ENCODE measurements at regions of chr6 and their contacts with region 1.

Region 1: DNA sequence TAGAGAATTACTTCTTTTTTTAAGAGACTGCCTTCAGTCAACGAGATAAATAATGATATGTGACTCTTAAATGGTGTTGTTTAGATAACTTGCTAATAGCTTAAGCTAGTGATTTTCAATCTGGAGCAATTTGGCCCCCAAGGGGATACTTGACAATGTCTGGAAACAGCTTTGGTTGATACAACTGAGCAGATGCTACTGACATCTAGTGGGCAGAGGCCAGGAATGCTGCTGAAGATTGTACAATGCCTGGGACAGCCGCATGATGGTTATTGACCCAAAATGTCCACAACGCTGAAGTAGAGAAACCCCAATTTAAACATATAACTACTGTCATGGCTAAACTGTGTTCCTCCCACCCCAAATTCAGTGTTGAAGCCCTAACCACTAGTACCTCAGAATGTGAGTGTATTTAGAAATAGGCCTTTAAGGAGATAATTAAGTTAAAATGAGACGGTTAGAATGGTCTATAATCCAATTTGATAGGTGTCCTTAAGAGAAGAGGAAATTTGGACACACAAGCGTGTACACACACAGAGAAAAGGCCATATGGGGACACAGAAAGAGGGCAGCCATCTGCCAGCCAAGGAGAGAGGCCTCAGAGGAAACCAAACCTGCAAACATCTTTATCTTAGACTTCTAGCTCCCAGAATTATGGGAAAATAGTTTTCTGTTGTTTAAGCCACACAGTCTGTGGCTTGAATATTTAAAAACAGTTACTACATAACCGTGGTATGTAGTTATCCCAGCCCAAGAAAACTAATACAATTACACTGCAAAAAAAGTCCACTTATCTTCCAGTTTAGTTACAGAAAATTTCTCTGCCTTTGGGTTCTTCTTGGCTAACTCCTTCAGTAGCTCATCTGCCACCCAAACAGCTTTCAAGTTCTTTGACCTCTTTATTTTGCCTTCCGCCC is 22.2 kb downstream of the RWDD2A start:
- DNase-seq: peak; percentile 82
- H3K4me3 ChIP-seq: no peak overlapping the region
- H3K27ac ChIP-seq: no peak overlapping the region
- H3K4me1 ChIP-seq: no peaks in the 10 kb centered on the region
- H3K27me3 ChIP-seq: no peaks in the 10 kb centered on the region
- CTCF ChIP-seq: peak; percentile 82 to 83
- POLR2A ChIP-seq: no peak

Region 2: GRCh38 chr6:83169511-83169910 is 45.9 kb before region 1 on chr6:
- CTCF ChIA-PET with region 1: interaction called, 18 read pairs
- POLR2A ChIA-PET with region 1: no interaction called
- dilution Hi-C with region 1: no loop called
- intact Hi-C with region 1: loop called (anchors 2 kb)
- DNase-seq: no peak
- H3K4me3 ChIP-seq: no peak overlapping the region
- H3K27ac ChIP-seq: no peak overlapping the region
- H3K4me1 ChIP-seq: no peaks in the 10 kb centered on the region
- H3K27me3 ChIP-seq: no peaks in the 10 kb centered on the region
- CTCF ChIP-seq: no peak
- POLR2A ChIP-seq: no peak

Region 3: GRCh38 chr6:83176246-83176645 is 39.1 kb before region 1 on chr6:
- CTCF ChIA-PET with region 1: interaction called, 9 read pairs
- POLR2A ChIA-PET with region 1: no interaction called
- dilution Hi-C with region 1: no loop called
- intact Hi-C with region 1: loop called (anchors 2 kb)
- DNase-seq: no peak
- H3K4me3 ChIP-seq: no peak overlapping the region
- H3K27ac ChIP-seq: no peak overlapping the region
- H3K4me1 ChIP-seq: no peaks in the 10 kb centered on the region
- H3K27me3 ChIP-seq: no peaks in the 10 kb centered on the region
- CTCF ChIP-seq: no peak
- POLR2A ChIP-seq: no peak

Region 4: DNA sequence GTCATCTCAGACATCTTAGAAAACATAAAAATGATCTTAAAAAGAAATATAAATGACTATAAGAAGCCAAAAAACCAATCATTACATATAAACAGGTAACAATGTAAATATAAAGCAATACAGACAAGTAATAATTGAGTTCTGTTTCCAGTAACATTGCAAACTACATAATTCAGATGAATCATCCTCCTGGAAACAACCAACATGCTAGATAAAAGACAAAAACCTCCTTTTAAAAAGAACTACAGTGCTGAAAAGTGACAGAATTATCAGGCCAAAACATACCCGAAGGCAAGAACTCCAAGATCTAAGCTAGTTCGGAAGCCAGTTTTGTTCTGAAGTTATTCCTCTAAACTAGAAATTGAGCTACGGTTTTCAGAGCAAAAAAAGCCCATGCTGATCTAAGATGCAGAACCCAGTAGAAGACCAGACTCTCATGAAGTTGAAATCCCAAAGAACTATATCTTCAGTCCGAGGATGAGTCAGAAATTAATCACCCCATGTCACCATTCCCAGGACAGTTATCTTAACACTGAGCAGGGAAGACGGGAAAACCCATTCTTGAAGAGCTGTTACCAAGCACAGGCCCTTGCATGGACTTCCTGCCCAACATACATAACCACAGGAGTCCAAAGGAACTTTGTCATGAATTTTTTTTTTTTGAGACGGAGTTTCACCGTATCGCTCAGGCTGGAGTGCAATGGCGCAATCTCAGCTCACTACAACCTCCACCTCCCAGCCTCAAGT is 32.1 kb before region 1 on chr6:
- CTCF ChIA-PET with region 1: interaction called, 30 read pairs
- POLR2A ChIA-PET with region 1: no interaction called
- dilution Hi-C with region 1: no loop called
- intact Hi-C with region 1: no loop called
- DNase-seq: no peak
- H3K4me3 ChIP-seq: no peak overlapping the region
- H3K27ac ChIP-seq: no peak overlapping the region
- H3K4me1 ChIP-seq: no peaks in the 10 kb centered on the region
- H3K27me3 ChIP-seq: no peaks in the 10 kb centered on the region
- CTCF ChIP-seq: no peak
- POLR2A ChIP-seq: no peak

Region 5: GRCh38 chr6:83192871-83193746 is 22.3 kb before region 1 on chr6 and contains the starts of genes PGM3 and RWDD2A:
- CTCF ChIA-PET with region 1: interaction called, 83 read pairs
- POLR2A ChIA-PET with region 1: no interaction called
- dilution Hi-C with region 1: no loop called
- intact Hi-C with region 1: loop called (anchors 1 kb)
- DNase-seq: peak; percentile 93
- H3K4me3 ChIP-seq: peak within 1 kb of the TSS; percentile 52 to 99 (median 94)
- H3K27ac ChIP-seq: peak within 1 kb of the TSS; percentile 49
- H3K4me1 ChIP-seq: peaks cover 23% of the 10 kb centered on the region
- H3K27me3 ChIP-seq: no peaks in the 10 kb centered on the region
- CTCF ChIP-seq: no peak
- POLR2A ChIP-seq: peak; percentile 86
- total RNA-seq, gene PGM3: 70.7 and 74.8 TPM in 2 replicates
- total RNA-seq, gene RWDD2A: 4.3 and 4.5 TPM in 2 replicates

Region 6: GRCh38 chr6:83199863-83200225 is 15.5 kb before region 1 on chr6:
- CTCF ChIA-PET with region 1: interaction called, 83 read pairs
- POLR2A ChIA-PET with region 1: interaction called, 3 read pairs
- dilution Hi-C with region 1: no loop called
- intact Hi-C with region 1: no loop called
- DNase-seq: peak; percentile 69
- H3K4me3 ChIP-seq: no peak overlapping the region
- H3K27ac ChIP-seq: peak overlapping the region; percentile 88
- H3K4me1 ChIP-seq: peaks cover 26% of the 10 kb centered on the region
- H3K27me3 ChIP-seq: no peaks in the 10 kb centered on the region
- CTCF ChIP-seq: no peak
- POLR2A ChIP-seq: no peak

Region 7: DNA sequence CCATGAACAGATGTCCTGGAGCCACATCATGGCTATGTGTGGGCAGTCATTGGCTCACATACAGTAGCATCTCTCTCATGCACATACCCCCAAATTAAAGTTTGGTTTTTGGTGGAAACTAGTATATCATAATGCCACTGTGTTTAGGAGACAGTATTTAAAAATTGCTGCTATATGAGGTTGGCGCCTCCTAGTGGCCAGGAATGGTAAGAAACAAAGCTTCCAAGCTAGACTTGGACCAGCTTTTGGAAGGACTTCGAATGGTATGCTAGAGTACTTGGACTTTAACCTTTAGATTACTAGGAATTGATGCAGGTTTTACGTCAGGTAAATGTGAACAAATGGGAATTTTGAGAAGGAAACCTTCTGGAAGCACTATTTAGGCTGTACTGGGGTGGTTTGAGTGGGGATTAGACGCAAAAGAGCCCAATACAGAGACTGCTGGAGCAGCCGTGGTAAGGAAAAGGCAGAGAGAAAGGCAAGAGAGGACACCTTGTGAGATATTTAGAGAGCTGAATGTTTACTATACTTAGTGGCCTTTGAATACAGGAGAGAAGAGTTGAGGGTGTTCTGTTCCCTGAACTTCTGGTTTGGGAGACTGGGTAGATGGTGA is 320.8 kb after region 1 on chr6:
- CTCF ChIA-PET with region 1: interaction called, 10 read pairs
- POLR2A ChIA-PET with region 1: no interaction called
- dilution Hi-C with region 1: no loop called
- intact Hi-C with region 1: no loop called
- DNase-seq: peak; percentile 58
- H3K4me3 ChIP-seq: no peak overlapping the region
- H3K27ac ChIP-seq: no peak overlapping the region
- H3K4me1 ChIP-seq: no peaks in the 10 kb centered on the region
- H3K27me3 ChIP-seq: peaks cover 0 to 7% of the 10 kb centered on the region in 2 experiments
- CTCF ChIP-seq: peak; percentile 69 to 81
- POLR2A ChIP-seq: no peak